ENCODE measurements at regions of chr1 and their contacts with region 1.

Region 1: DNA sequence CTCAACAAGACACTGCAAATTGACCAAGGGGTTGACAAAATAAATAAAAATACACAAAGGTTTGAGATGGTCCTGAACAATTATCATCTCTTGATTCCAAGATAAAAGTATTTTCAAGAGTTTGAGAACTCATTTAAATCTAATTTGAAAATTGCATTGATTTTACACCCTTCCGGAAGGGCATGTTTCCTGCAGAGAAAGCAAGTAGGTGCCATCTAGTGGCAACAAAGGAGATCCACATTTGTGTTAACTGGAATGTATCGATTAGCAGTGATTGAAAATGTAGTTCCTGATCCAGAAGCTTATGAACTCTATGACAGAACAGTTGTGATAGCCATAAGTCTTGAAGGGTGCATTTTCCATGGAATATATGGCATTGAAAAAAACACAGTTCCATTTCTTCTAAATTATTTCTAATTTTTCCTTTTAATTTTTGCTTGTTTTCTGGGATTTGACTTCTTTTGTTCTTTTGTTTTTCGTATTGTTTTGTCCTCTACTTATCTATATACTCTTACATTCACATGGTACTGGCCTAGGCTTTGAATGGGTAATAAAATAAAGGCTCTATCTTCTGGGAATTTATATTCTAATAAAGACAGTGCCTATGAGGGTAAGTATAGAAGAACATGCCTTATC is 143.7 kb downstream of the DNM3 start:
- DNase-seq: peak in 11 of 42 donors; percentile 14 to 64 (median 47)

Region 2: DNA sequence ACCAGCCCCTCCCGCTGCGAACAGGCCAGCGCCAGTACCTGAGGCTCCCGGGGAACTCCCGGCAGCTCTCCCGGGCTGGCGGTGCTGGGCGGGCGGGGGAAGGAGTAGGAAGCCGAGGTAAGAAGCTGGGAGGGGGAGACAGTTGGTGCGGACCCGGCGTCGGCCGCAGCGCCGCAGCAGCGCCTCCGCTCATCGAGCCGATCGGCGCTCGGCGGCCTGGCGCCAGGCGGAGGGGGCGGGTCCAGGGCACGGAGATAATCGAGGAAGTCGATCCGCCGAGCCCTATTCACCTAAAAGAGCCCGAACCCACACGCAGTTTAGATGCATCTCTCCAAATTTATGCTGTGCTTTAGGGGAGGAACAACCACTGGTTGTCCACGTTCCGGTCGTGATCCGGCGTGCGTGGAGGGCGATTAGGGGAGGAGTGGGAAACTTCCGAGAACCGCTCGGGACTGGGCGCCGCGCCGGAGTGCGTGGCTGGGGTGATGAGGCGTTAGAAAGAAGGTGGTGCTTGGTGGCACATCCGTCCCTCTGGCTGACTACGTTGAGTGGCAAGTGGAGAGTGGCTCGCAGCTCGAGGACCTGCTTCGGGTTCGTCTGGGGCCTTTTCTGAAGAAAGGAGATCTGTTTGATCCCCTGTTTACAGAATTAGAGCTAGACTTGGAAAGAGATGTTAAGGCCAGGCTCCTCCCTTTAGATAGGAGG is 242.9 kb before region 1 on chr1 and contains the start of gene VAMP4:
- intact Hi-C with region 1: loop called (anchors 5 kb)
- DNase-seq: peak; percentile 72 to 96 (median 90)

Region 3: GRCh38 chr1:171801487-171801891 is 183.5 kb before region 1 on chr1:
- intact Hi-C with region 1: loop called (anchors 2 kb)
- DNase-seq: peak in 24 of 42 donors; percentile 11 to 77 (median 48)

Region 4: GRCh38 chr1:171841050-171841940 is 143.7 kb before region 1 on chr1 and contains the start of gene DNM3:
- intact Hi-C with region 1: loop called (anchors 5 kb)
- DNase-seq: peak; percentile 81 to 97 (median 94)

Region 5: GRCh38 chr1:171913385-171913784 is 71.6 kb before region 1 on chr1:
- intact Hi-C with region 1: loop called (anchors 10 kb)
- DNase-seq: peak in 27 of 42 donors; percentile 14 to 82 (median 46)

Region 6: DNA sequence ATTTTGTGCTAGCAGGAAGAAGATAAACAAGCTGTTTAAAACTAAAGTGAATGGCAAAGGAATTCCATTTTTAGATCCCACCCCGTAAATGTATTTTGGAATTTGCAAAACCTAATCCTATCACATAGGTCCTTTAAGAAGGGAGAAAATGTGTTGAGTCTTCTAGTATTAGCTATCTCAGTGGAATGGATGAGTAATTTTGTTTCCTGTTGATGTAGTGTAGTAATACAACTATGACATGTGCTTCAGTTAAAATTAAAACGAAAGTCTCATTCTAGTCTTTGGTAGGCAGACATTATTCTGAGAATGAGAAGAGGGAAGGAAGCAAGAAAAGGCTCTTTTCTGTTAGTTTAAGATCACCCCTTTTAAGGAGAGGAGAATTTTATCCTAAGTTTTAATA is 169.6 kb after region 1 on chr1:
- intact Hi-C with region 1: no loop called
- DNase-seq: no peak